ENCODE measurements at regions of chr9 and their contacts with region 1.

Region 1: DNA sequence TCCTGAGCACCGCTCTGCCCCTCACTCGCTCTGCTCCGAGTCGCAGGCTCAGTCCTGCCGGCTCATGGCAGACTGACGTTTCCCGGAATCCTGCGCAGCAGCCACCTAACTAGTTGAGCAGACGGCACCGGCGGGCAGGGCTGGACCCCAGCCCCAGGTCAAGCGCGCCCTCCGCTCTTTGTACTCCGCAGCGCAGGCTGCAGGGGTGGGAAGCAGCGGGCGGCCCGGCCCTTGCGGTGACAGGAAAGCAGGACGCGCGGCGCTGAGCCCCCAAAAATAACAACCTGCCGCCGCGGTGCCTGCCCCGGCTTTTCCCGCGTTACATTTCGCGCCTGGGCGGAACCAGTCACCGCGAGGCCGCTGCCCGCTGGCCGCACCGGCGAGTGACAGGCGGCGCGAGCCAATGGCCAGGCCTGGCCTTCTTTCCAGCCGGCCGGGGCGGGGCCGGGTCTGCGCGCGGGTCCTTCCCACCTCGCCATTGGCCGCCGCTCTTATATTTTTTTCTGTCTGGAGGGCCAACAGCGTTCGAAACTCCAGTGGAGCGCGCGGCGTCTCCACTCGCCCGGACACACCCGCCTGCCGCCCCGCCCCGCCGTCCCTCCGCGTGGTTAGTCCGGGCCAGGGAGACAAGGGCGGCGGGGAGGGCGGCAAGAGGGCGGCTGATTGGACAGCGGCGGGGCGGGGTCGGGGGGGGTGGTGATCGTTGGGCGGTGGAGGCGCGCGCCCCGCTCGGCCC is at the start of gene ZNF367:
- DNase-seq: peak; percentile 98
- ATAC-seq: peak; percentile 90 to 96 (median 92)
- H3K4me3 ChIP-seq: peak within 1 kb of the TSS; percentile 56 to 97 (median 85)
- H3K27ac ChIP-seq: peak within 1 kb of the TSS; percentile 95 to 100 (median 99)
- H3K4me1 ChIP-seq: peaks cover 7 to 52% (median 33%) of the 10 kb centered on the region in 9 donors
- H3K27me3 ChIP-seq: no peaks in the 10 kb centered on the region
- CTCF ChIP-seq: no peak
- total RNA-seq, gene ZNF367: 2.4 to 6.4 (median 4.0) TPM

Region 2: DNA sequence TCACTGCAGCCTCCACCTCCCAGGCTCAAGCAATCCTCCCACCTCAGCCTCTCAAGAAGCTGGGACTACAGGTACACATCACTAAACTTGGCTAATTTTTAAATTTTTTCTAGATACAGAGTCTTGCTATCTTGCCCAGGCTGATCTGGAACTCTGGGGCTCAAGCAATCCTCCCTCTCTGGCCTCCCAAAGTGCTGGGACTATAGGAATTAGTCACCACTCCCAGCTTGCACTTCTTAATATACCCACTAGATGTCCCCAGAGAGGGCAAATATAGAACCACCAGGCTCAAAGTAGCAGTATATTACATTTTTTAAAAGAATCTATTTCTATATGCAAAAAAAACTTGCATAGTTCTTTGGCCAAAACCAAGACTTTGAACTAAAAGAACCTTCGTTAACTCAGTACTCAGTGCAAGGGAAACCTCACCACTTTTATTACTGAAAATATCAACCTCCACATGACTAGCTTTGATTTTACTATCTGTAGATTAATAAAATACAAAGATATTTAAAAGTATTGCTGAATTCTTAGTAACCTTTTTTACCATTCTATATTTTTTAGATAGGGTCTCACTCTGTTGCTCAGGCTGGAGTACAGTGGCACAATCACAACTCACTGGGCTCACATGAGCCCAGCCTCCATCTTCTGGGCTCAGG is 90.4 kb before region 1 on chr9:
- intact Hi-C with region 1: loop called in 2 of 10 experiments (anchors 10 kb)
- DNase-seq: peak in 1 of 2 donors; percentile 52
- ATAC-seq: peak; percentile 29 to 86 (median 70)
- H3K4me3 ChIP-seq: no peak overlapping the region
- H3K27ac ChIP-seq: no peak overlapping the region
- H3K4me1 ChIP-seq: no peaks in the 10 kb centered on the region
- H3K27me3 ChIP-seq: no peaks in the 10 kb centered on the region
- CTCF ChIP-seq: peak; percentile 81 to 90 (median 85)

Region 3: DNA sequence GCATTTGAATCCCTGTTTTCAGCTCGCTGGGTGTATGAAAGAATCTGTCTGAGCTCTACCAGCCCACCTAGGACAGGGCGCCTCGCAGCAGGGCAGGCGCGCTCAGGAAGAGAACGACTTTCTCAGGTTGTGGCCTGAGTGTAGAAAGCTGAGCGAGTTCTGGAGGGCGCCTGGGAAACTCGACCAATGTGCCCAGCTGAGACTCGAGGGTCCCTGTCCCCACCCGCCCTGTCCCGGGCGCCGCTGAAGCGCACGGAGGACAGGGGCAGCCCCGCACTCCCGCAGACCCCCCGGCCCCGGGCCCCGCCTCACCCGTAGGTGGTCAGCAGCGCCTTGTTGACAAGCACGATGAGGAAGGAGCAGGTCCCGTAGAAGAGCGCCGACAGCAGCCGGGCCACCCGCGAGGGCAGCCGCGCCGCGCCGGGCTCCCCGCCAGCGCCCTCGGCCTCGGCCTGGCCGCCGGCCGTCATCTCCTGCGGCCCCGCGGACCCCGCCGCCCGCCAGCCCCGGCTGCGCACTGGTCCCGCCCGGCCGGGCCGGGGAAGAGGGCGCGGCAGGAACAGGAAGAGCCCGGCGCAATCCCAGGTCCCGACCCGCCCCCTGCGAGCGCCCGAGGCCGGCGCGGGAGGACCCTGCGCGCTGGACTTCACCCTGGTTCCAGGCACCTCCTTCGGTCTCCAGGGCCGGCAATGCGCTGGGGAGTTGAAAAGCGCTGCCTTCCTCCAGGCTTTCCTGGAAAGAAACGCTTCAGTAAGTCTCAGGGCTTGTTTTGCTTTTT is 34.9 kb before region 1 on chr9 and contains the start of gene SLC35D2:
- intact Hi-C with region 1: loop called in 3 of 10 experiments (anchors 2 to 5 kb)
- DNase-seq: peak; percentile 65 to 76
- ATAC-seq: peak; percentile 92 to 98 (median 96)
- H3K4me3 ChIP-seq: peak within 1 kb of the TSS; percentile 59 to 88 (median 80)
- H3K27ac ChIP-seq: peak within 1 kb of the TSS; percentile 76 to 93 (median 88)
- H3K4me1 ChIP-seq: peaks cover 3 to 41% (median 20%) of the 10 kb centered on the region in 9 donors
- H3K27me3 ChIP-seq: no peaks in the 10 kb centered on the region
- CTCF ChIP-seq: no peak
- total RNA-seq, gene SLC35D2: 10.8 to 20.8 (median 13.2) TPM

Region 4: DNA sequence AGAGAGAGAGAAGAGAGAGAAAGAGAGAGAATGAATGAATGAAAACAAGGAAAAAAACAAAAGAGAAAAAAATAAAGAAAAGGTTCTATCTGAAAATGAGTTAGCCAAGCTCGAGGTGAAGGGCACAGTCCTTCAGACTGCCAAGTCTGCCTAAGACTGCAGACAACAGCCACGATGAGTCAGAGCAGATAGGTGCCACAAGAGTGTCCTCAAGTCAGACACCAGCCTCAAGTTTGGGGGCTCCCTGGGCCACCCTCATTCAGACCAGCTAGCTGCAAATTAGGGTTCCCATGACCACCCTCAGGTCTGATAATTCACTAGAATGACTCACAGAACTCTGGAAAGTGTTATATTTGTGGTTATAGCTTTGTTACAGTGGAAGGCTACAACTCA is 17.8 kb after region 1 on chr9:
- intact Hi-C with region 1: no loop called
- DNase-seq: no peak
- ATAC-seq: no peak
- H3K4me3 ChIP-seq: no peak overlapping the region
- H3K27ac ChIP-seq: no peak overlapping the region
- H3K4me1 ChIP-seq: no peaks in the 10 kb centered on the region
- H3K27me3 ChIP-seq: no peaks in the 10 kb centered on the region
- CTCF ChIP-seq: no peak

Region 5: GRCh38 chr9:96449845-96450612 is 31.8 kb after region 1 on chr9 and contains the start of gene HABP4:
- intact Hi-C with region 1: loop called in 5 of 10 experiments (anchors 1 to 5 kb)
- DNase-seq: peak; percentile 96 to 98
- ATAC-seq: peak; percentile 99 to 100 (median 99)
- H3K4me3 ChIP-seq: peak within 1 kb of the TSS; percentile 68 to 97 (median 84)
- H3K27ac ChIP-seq: peak within 1 kb of the TSS; percentile 53 to 94 (median 84)
- H3K4me1 ChIP-seq: peaks cover 0 to 33% (median 11%) of the 10 kb centered on the region in 9 donors
- H3K27me3 ChIP-seq: peaks cover 0 to 30% (median 0%) of the 10 kb centered on the region in 7 donors
- CTCF ChIP-seq: peak in 1 of 9 donors; percentile 40
- total RNA-seq, gene HABP4: 20.8 to 30.4 (median 25.9) TPM

Region 6: DNA sequence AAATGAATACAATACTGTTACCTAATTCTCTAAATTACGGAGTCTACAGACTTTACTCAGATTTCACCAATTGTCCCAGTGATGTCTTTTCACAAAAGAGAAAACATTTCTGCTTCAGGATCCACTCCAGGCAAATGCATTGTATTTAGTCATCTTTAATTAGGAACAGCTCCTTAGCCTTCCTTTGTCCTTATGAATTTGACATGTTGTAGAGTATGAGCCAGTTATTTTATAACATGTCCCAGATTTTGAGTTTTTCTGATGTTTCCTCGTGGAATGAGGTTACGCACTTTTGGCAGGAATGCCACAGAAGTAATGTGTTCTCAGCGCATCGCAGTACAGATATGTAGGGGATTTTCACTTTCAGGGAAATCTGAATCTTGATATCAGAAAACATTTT is 42.2 kb after region 1 on chr9:
- intact Hi-C with region 1: no loop called
- DNase-seq: no peak
- ATAC-seq: no peak
- H3K4me3 ChIP-seq: no peak overlapping the region
- H3K27ac ChIP-seq: no peak overlapping the region
- H3K4me1 ChIP-seq: peaks cover 0 to 7% (median 0%) of the 10 kb centered on the region in 9 donors
- H3K27me3 ChIP-seq: no peaks in the 10 kb centered on the region
- CTCF ChIP-seq: no peak

Region 7: GRCh38 chr9:96478829-96479371 is 60.7 kb after region 1 on chr9:
- intact Hi-C with region 1: no loop called
- DNase-seq: no peak
- ATAC-seq: no peak
- H3K4me3 ChIP-seq: no peak overlapping the region
- H3K27ac ChIP-seq: no peak overlapping the region
- H3K4me1 ChIP-seq: peaks cover 0 to 9% (median 0%) of the 10 kb centered on the region in 9 donors
- H3K27me3 ChIP-seq: no peaks in the 10 kb centered on the region
- CTCF ChIP-seq: no peak

Region 8: DNA sequence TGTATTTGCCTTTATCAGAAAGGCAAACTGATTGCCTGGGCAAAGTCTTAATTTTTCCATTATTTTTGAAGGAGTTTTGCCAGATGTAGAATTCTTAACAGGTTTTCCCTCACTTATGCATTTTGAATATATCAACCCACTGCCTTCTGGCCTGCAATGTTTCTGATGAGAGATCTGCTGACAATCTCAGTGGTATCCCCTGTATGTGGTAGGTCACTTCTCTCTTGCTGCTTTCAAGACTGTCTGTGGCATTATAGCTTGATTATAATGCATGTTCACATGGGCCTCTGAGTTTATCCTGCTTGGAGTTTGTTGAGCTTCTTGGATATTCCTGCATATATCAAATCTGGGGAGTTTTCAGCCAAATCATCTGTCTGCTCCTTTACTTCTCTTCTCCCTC is 113.9 kb after region 1 on chr9:
- intact Hi-C with region 1: no loop called
- DNase-seq: no peak
- ATAC-seq: no peak
- H3K4me3 ChIP-seq: no peak overlapping the region
- H3K27ac ChIP-seq: no peak overlapping the region
- H3K4me1 ChIP-seq: no peaks in the 10 kb centered on the region
- H3K27me3 ChIP-seq: no peaks in the 10 kb centered on the region
- CTCF ChIP-seq: no peak

Region 9: GRCh38 chr9:96654443-96655197 is 236.4 kb after region 1 on chr9:
- intact Hi-C with region 1: loop called in 3 of 10 experiments (anchors 1 to 10 kb)
- DNase-seq: peak; percentile 89 to 92
- ATAC-seq: peak; percentile 89 to 96 (median 94)
- H3K4me3 ChIP-seq: peak overlapping the region; percentile 49 to 74 (median 66)
- H3K27ac ChIP-seq: peak overlapping the region; percentile 95 to 100 (median 99)
- H3K4me1 ChIP-seq: peaks cover 0 to 41% (median 24%) of the 10 kb centered on the region in 9 donors
- H3K27me3 ChIP-seq: no peaks in the 10 kb centered on the region
- CTCF ChIP-seq: peak in 3 of 9 donors; percentile 8 to 44 (median 43)

Measured in heart right ventricle (tissue), 16 donors.